ENCODE measurements at regions of chrX and their contacts with region 1.

Region 1: GRCh38 chrX:20252381-20253231 is 14.1 kb downstream of the RPS6KA3 start:
- DNase-seq: peak; percentile 16
- CTCF ChIP-seq: no peak

Region 2: DNA sequence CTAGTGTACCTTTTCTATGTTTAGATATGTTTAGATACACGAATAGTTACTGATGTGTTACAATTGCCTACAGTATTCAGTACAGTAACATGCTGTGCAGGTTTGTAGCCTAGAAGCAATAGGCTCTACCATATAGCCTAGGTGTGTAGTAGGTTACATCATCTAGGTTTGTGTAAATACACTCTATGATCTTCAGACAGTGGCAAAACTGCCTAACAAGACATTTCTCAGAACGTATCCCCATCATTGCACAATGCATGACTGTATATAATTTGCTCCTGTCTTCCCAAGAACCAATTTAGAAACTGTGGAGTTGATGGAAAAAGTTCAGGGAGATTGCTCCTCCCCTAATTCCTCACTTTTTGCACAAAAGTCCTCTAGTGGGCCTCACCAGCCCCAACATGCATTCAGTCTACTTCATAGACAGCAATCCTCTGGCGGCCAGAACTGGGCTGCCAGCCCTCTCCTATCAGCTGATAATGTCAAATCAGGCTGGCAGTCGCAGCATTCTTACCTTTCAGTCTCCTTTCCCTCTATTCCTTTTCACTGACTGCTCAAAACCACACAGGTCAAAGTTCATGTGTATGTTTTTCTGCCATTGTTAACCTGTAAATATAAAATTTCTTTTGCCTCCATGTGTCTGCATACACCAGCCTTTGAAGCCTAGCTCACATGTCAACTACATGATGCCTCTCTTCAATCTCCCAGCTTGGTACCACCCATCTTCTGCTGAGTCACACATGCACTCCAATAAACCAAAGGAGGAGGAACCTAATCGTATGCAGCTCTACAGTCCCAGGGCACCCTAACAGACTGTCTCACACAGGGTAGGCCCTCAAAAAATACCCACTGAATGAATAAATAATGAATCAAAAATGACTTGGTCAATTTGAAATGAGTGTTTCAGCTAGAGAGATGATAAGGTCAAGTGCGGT is 293.8 kb before region 1 on chrX:
- CTCF ChIA-PET with region 1: no interaction called
- POLR2A ChIA-PET with region 1: no interaction called
- DNase-seq: no peak
- CTCF ChIP-seq: no peak

Region 3: GRCh38 chrX:20237864-20238263 is 14.7 kb before region 1 on chrX:
- CTCF ChIA-PET with region 1: no interaction called
- POLR2A ChIA-PET with region 1: no interaction called
- DNase-seq: no peak
- CTCF ChIP-seq: no peak

Region 4: DNA sequence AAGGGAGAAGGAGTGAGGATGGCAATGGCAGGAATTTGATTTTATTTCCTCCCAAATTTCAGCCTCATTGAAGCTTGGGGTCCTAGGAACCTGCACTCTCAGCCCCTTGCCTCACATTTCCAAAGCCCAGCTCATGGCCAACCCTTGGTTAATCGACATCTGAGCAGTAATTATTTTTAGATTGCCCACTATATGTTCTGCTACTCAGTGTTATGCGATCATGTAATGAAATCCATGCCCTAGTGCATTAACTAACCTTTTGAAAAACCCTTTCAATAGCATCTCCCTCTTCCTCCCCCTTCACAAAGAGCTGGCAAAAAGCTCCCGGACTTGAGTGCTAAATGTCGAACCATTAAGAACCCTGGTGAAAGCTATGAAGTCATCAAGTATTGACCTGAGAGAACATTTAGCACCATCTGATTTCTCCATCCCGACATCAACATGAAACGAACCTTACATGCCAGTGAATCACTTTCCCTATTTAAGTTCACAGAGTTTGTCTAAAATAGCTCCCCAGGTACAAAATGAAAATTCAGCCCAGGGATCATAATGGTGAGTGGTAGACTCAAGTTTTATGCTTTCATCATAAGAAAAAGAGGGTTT is 73.3 kb after region 1 on chrX:
- CTCF ChIA-PET with region 1: no interaction called
- POLR2A ChIA-PET with region 1: interaction called, 10 read pairs
- DNase-seq: no peak
- CTCF ChIP-seq: no peak